ENCODE measurements at regions of chr15 and their contacts with region 1.

Region 1: GRCh38 chr15:99275525-99276128 is 24.3 kb downstream of the LRRC28 start:
- DNase-seq: no peak
- H3K4me3 ChIP-seq: no peak overlapping the region
- H3K27ac ChIP-seq: no peak overlapping the region
- H3K4me1 ChIP-seq: no peaks in the 10 kb centered on the region
- H3K27me3 ChIP-seq: no peaks in the 10 kb centered on the region
- CTCF ChIP-seq: no peak

Region 2: DNA sequence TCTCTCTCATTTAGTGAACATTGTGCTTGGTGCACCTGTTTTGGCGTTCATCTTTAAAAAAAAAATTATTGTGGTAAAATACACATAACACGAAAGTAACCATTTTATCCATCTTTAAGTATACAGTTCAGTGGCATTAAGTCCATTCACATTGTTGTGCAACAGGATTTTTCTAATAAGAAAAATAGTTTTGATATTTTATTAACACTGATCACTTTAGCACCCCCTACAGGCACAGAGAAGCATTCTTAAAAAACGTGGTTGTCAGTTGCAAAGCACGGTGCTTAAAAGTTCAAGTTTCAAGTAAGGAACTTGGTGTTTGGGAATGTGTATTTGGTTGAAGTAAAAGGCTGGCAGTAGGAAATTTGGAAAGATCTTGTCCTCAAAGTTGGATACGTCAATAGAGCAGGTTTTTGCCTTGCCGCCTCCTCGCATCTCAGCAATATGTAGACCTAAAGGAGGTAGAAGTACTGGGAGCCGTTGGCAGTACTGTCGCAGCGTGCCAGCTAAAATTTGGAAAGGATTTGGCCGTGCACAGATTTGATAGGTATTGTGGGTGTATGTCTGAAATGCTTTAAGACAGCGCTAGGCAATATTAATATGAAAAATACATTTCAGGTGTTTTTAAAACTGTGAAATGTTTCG is 86.0 kb after region 1 on chr15:
- CTCF ChIA-PET with region 1: no interaction called
- dilution Hi-C with region 1: no loop called
- in situ Hi-C with region 1: loop called in 1 of 2 experiments (anchors 10 kb)
- intact Hi-C with region 1: loop called (anchors 5 kb)
- DNase-seq: peak; percentile 14
- H3K4me3 ChIP-seq: no peak overlapping the region
- H3K27ac ChIP-seq: no peak overlapping the region
- H3K4me1 ChIP-seq: no peaks in the 10 kb centered on the region
- H3K27me3 ChIP-seq: no peaks in the 10 kb centered on the region
- CTCF ChIP-seq: peak; percentile 59 to 66

Region 3: GRCh38 chr15:99733268-99734039 is 457.8 kb after region 1 on chr15 and contains the start of gene LYSMD4:
- CTCF ChIA-PET with region 1: interaction called, 16 read pairs
- dilution Hi-C with region 1: no loop called
- in situ Hi-C with region 1: loop called in 1 of 2 experiments (anchors 10 kb)
- intact Hi-C with region 1: loop called (anchors 1 kb)
- DNase-seq: peak; percentile 91
- H3K4me3 ChIP-seq: peak within 1 kb of the TSS; percentile 64 to 82 (median 70)
- H3K27ac ChIP-seq: peak within 1 kb of the TSS; percentile 47
- H3K4me1 ChIP-seq: peaks cover 28% of the 10 kb centered on the region
- H3K27me3 ChIP-seq: no peaks in the 10 kb centered on the region
- CTCF ChIP-seq: no peak
- total RNA-seq, gene LYSMD4: 10.9 to 20.5 TPM

Region 4: DNA sequence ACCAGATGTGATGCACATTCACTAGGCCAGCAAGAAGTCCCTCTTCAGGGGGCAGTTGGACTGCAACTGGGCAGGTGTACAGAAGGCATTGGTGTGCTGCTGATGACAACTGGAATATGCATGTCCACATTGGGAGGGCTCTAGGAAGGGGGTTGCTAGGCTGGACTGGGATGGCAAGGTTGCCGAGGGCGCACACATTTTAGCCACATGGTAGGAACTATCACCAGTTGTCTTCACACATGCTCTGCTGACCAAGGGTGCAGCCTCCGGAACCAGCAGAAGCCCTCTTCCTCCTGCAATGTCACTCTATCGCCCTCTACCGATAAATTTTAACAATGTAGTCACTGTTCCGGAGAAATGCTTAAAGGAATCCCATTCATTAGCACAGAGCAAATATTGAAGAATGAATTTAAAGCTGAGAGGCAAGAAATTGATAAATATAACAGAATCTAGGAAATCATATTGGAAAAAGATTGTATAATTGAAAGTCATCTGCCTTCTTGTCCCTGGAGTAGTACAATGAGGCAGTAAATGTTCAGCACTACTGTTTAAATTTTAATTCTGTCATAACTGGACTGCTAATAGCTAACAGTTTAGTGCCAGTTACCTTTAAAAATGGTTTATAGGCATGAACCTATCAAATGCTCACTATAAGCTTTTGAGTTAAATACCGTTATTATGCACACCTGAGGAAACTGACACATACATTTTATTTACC is 480.2 kb after region 1 on chr15:
- CTCF ChIA-PET with region 1: interaction called, 5 read pairs
- dilution Hi-C with region 1: no loop called
- in situ Hi-C with region 1: no loop called
- intact Hi-C with region 1: loop called (anchors 1 kb)
- DNase-seq: peak; percentile 52
- H3K4me3 ChIP-seq: no peak overlapping the region
- H3K27ac ChIP-seq: no peak overlapping the region
- H3K4me1 ChIP-seq: no peaks in the 10 kb centered on the region
- H3K27me3 ChIP-seq: no peaks in the 10 kb centered on the region
- CTCF ChIP-seq: peak; percentile 74 to 87

Region 5: DNA sequence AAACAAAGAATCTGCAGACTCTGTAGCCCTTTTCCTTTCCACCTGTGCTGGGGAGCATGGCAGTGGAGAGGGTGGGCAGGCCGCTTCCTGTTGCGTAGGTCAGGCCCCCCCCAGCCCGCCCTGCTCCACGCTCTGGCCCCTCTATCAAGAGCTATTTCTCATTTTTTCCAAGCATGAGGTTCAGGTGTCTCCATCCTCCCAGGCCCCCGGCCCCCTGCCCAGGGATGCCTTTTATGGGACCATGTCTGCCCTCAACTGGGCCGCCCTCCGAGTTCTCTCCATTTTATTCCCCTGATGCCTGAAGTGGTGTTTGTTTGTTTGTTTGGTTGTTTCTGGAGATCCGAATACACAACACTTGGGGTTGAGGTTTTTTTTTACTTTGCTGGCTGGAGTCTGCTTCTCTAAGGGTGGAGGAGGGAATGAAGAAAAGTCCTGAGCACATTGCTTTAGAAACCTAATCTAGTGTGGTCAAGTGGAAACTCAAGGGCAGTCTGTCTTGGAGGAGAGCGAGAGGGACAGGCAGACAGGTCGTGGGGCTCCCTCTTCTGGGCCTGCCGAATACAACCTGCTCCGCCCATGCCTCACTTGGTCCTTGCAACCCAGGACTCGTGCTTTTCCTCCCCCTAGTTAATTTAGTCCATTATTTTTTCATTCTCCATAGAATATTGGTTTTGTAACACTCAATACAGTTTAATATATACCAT is 634.1 kb after region 1 on chr15:
- CTCF ChIA-PET with region 1: no interaction called
- dilution Hi-C with region 1: no loop called
- in situ Hi-C with region 1: no loop called
- intact Hi-C with region 1: loop called (anchors 2 kb)
- DNase-seq: no peak
- H3K4me3 ChIP-seq: no peak overlapping the region
- H3K27ac ChIP-seq: no peak overlapping the region
- H3K4me1 ChIP-seq: no peaks in the 10 kb centered on the region
- H3K27me3 ChIP-seq: no peaks in the 10 kb centered on the region
- CTCF ChIP-seq: peak; percentile 9 to 30